Activated T-helper 1 cell treated with anti-CD3 and anti-CD28 coated beads, Interleukin-12 subunit alpha, Interleukin-12 subunit beta, Interleukin-2, Interleukin-4 antibody, amounts not matched to agents 30 ng/mL and 10 ng/mL and 1 ng/mL, durations not matched to agents 14 hours and 24 hours and 36 hours (primary cell): ENCODE measurements at regions of chr12 and their contacts with region 1.

Region 1: GRCh38 chr12:106357549-106358395 is at the start of gene POLR3B:
- DNase-seq: peak; percentile 94
- H3K4me3 Mint-ChIP-seq: peak within 1 kb of the TSS; percentile 85
- H3K27ac Mint-ChIP-seq: peak within 1 kb of the TSS; percentile 79
- H3K4me1 Mint-ChIP-seq: peaks cover 16% of the 10 kb centered on the region
- H3K27me3 Mint-ChIP-seq: no peaks in the 10 kb centered on the region
- total RNA-seq, gene POLR3B: 11.5 and 14.3 TPM in 2 replicates

Region 2: DNA sequence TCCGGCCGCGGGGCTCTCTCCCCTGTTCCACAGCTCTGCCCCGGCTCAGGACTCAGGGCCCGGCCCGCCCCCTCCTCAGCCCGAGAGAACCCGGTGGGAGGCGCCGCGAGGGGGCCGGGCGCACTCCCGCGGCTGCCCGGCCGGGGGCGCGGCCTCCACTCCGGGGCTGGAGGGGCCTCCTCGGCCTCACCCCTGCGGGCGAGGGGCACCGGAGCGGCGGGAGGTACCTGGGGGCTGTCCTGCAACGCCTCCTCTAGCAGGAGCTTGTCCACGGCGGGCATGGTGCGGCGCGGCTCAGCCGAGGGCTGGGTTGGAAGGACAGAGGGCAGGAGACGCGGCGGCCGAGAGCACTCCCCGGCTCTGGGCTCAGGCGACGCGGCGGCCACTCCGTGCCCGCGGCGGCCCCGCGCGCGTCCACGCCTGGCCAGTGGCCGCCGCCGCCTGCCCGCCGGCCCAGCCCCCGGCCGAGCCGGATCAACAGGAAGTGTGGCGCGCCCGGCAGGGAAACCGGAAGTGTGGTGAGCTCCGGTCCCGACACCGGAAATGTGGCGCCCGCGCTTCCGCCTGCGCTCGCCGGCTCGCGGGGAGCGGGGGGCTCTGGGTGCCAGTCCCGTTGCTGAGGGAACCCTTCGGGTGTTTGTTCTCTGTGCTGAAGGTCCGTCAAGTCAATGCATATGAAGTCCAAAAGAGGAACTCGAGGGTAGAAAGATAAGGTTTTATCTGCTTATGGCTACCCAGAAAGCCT is 1121.9 kb before region 1 on chr12 and contains the start of gene APPL2:
- intact Hi-C with region 1: loop called (anchors 5 kb)
- DNase-seq: peak; percentile 71
- H3K4me3 Mint-ChIP-seq: peak within 1 kb of the TSS; percentile 91
- H3K27ac Mint-ChIP-seq: peak within 1 kb of the TSS; percentile 77
- H3K4me1 Mint-ChIP-seq: peaks cover 32% of the 10 kb centered on the region
- H3K27me3 Mint-ChIP-seq: peaks cover 3% of the 10 kb centered on the region
- total RNA-seq, gene APPL2: 22.9 and 27.8 TPM in 2 replicates

Region 3: GRCh38 chr12:106223485-106224354 is 134.1 kb before region 1 on chr12:
- intact Hi-C with region 1: loop called (anchors 2 kb)
- DNase-seq: peak; percentile 59
- H3K4me3 Mint-ChIP-seq: no peak overlapping the region
- H3K27ac Mint-ChIP-seq: no peak overlapping the region
- H3K4me1 Mint-ChIP-seq: peaks cover 29% of the 10 kb centered on the region
- H3K27me3 Mint-ChIP-seq: peaks cover 3% of the 10 kb centered on the region

Region 4: DNA sequence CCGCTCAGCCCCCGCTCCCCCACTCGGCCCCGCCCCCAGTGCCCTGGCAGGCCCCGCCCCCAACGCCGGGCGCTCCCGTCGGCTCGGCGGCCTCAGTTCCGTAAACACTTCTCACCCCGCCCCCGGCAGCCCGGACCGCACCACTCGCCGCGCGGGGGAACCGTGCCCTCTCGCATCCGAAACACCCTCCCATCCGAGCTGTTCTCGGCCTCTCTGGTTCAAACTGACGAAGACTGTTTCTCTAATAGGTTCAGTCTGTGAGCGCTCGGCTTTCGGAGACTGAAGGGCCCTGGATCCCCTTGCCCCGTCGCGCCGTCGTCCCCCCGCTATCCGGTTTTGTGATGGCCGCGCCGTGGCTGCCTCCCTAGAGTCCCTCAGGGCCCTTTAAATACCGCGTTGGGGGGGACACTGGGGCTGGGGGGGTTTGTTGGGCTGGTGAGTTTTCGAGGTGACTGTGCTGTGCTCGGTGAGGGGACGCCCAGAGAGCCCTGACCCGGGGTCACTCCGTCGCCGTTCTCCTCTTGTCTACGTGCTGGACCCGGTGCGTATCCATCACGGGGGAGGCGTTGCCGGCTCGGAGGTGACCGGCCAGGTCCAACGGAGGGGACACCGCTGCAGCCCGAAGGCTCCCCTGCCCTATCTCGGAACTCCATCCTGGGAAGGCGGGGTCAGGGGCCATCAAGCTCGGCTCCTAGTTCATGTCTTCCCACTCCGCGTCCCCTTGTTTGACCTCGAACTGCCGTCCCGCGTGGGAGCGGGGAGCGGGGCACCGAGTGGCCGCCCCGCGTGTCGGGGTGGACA is 55.2 kb before region 1 on chr12 and contains the start of gene TCP11L2:
- intact Hi-C with region 1: loop called (anchors 1 kb)
- DNase-seq: peak; percentile 83
- H3K4me3 Mint-ChIP-seq: peak within 1 kb of the TSS; percentile 93
- H3K27ac Mint-ChIP-seq: peak within 1 kb of the TSS; percentile 100
- H3K4me1 Mint-ChIP-seq: peaks cover 49% of the 10 kb centered on the region
- H3K27me3 Mint-ChIP-seq: no peaks in the 10 kb centered on the region
- total RNA-seq, gene TCP11L2: 4.0 and 4.3 TPM in 2 replicates

Region 5: DNA sequence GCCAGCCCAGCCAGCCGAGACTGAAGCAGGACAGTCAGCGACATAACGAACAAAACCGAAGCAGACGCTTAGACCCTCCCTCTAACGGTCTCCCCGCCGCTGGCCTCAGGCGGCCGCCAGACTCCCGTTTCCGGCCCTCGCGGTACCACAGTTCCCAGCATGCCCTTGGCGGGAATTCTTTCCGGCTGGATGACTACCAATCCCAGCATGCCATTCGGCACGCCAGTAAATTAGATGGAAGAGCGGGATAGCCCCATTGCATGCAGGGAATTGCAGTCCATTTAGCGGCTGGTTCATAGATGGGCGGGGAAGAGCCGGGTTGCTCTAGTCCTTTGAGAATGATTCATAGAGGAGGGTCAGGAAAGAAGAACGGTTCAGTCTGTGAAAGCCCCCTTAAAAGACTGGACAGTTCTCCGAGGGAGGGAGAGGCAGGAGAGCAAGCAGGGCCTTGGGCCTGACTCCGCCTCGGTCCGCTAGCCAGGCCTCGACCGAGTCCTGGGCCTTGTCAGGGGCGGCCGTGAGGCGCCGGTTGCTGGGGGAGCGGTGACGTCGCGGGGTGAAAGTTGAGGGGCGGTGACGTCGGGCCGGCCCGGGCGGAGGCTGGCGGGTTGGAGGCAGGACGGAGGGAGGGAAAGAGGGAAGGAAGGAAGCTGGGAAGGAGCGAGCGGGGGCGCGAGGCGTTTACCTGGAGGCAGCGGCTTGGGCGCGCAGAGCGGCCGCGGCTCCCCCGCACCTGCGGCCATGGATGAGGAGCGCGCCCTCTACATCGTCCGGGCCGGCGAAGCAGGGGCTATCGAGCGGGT is 416.4 kb after region 1 on chr12 and contains the start of gene RIC8B:
- intact Hi-C with region 1: loop called (anchors 1 kb)
- DNase-seq: peak; percentile 77
- H3K4me3 Mint-ChIP-seq: peak within 1 kb of the TSS; percentile 100
- H3K27ac Mint-ChIP-seq: peak within 1 kb of the TSS; percentile 98
- H3K4me1 Mint-ChIP-seq: peaks cover 37% of the 10 kb centered on the region
- H3K27me3 Mint-ChIP-seq: no peaks in the 10 kb centered on the region
- total RNA-seq, gene RIC8B: 11.4 and 12.3 TPM in 2 replicates

Region 6: GRCh38 chr12:106919910-106920544 is 562.3 kb after region 1 on chr12:
- intact Hi-C with region 1: loop called (anchors 1 kb)
- DNase-seq: no peak
- H3K4me3 Mint-ChIP-seq: no peak overlapping the region
- H3K27ac Mint-ChIP-seq: no peak overlapping the region
- H3K4me1 Mint-ChIP-seq: peaks cover 9% of the 10 kb centered on the region
- H3K27me3 Mint-ChIP-seq: peaks cover 11% of the 10 kb centered on the region

Region 7: GRCh38 chr12:106986625-106987430 is 629.1 kb after region 1 on chr12 and contains the start of gene MTERF2:
- intact Hi-C with region 1: loop called (anchors 1 kb)
- DNase-seq: peak; percentile 69
- H3K4me3 Mint-ChIP-seq: peak within 1 kb of the TSS; percentile 91
- H3K27ac Mint-ChIP-seq: peak within 1 kb of the TSS; percentile 85
- H3K4me1 Mint-ChIP-seq: peaks cover 41% of the 10 kb centered on the region
- H3K27me3 Mint-ChIP-seq: peaks cover 2% of the 10 kb centered on the region
- total RNA-seq, gene MTERF2: 3.9 and 5.2 TPM in 2 replicates